ENCODE measurements at regions of chr4 and their contacts with region 1.

Region 1: DNA sequence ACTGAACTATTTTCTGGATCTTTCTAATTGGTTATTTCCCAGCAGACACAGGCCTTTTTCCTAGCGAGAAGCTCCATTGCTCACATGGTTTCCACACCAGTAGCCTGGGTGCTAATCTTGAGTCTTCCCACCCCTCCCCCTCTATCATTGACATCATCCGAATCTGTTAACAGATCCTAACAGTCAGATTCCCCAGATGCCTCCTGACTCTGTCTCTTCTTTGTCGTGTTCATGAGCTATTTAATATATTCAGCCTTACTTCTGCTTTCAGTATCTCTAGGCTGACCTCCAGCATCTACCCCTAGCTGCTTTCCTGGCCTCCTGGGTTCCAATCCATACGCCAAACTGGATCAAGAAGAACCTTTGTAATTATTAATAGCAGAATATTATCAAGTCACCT is 85.0 kb downstream of the CLNK start:
- DNase-seq: no peak
- ATAC-seq: no peak
- H3K4me3 ChIP-seq: no peak overlapping the region
- H3K4me3 Mint-ChIP-seq: no peak overlapping the region
- H3K27ac ChIP-seq: no peak overlapping the region
- H3K27ac Mint-ChIP-seq: no peak overlapping the region
- H3K4me1 ChIP-seq: peaks cover 0 to 8% of the 10 kb centered on the region in 2 donors
- H3K4me1 Mint-ChIP-seq: peaks cover 13% of the 10 kb centered on the region
- H3K27me3 ChIP-seq: no peaks in the 10 kb centered on the region
- H3K27me3 Mint-ChIP-seq: no peaks in the 10 kb centered on the region
- CTCF ChIP-seq: no peak

Region 2: DNA sequence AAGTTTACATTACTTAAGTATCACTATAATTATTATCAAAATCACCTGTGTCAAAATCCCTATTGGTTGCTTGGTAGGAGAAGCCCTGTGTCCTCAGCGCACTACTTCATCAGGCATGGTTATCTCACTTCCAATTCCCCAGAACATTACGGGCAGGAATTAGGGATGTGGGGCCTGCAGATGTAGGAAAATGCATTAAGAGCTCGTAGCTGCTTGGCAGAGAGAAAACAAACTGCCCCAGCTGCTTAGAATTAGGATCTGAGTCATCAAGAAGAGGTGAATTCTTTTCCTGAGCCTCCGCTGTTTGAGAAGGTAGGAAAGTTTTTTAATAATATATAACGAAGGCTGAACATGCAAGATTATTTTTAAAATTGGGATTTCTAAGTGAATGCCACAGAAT is 116.1 kb after region 1 on chr4:
- CTCF ChIA-PET with region 1: no interaction called
- POLR2A ChIA-PET with region 1: no interaction called
- intact Hi-C with region 1: no loop called
- DNase-seq: no peak
- ATAC-seq: no peak
- H3K4me3 ChIP-seq: no peak overlapping the region
- H3K4me3 Mint-ChIP-seq: no peak overlapping the region
- H3K27ac ChIP-seq: no peak overlapping the region
- H3K27ac Mint-ChIP-seq: no peak overlapping the region
- H3K4me1 ChIP-seq: no peaks in the 10 kb centered on the region
- H3K4me1 Mint-ChIP-seq: peaks cover 2% of the 10 kb centered on the region
- H3K27me3 ChIP-seq: no peaks in the 10 kb centered on the region
- H3K27me3 Mint-ChIP-seq: no peaks in the 10 kb centered on the region
- CTCF ChIP-seq: no peak

Region 3: GRCh38 chr4:10743357-10743756 is 143.8 kb after region 1 on chr4:
- CTCF ChIA-PET with region 1: no interaction called
- POLR2A ChIA-PET with region 1: interaction called, 10 read pairs
- intact Hi-C with region 1: no loop called
- DNase-seq: peak; percentile 75
- ATAC-seq: peak; percentile 84
- H3K4me3 ChIP-seq: peak overlapping the region in 1 of 5 experiments; percentile 29
- H3K4me3 Mint-ChIP-seq: no peak overlapping the region
- H3K27ac ChIP-seq: peak overlapping the region; percentile 31 to 44
- H3K27ac Mint-ChIP-seq: no peak overlapping the region
- H3K4me1 ChIP-seq: peaks cover 34 to 41% of the 10 kb centered on the region in 2 donors
- H3K4me1 Mint-ChIP-seq: peaks cover 15% of the 10 kb centered on the region
- H3K27me3 ChIP-seq: no peaks in the 10 kb centered on the region
- H3K27me3 Mint-ChIP-seq: no peaks in the 10 kb centered on the region
- CTCF ChIP-seq: no peak